MCF 10A (cell line): ENCODE measurements at regions of chr10 and their contacts with region 1.

Region 1: DNA sequence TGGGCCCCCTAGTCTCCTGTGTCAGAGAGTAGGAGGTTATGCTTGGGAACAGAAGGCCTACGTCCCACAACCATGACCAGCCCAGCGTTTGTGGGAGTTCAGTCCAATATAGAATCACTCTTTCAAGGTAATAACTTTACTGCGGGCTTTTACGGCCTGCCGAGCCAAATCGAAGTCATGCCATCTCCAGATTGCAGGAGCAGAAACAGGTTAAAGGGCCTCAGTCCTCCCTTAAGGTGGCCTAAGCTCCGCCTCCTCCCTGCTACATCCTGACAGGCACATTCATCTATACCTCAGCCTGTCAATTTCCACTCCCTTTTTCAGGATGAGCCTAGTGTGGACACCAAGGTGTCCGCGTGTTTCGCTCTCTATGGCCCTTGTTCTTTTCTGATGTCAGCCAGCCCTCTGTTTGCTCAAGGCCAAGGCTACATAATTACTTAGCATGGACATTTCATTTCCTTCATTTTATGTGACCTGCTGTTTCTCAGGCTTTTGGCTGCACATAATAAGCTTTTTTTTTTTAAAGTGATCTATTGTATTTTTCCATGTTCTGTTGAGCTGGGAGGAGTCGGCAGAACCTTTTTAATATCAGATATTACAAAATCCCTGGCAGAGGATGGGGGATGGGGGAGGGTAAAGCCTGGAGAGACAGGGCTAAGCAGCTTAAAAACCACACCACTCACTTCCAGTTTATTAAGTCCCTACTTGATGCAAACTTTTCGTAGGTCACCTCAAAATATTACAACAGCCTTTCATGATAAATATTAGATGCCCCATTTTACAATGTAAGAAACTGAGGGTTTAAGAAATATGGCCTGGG is 84.6 kb downstream of the CACNB2 start:
- DNase-seq: no peak
- H3K4me3 Mint-ChIP-seq: no peak overlapping the region
- H3K27ac Mint-ChIP-seq: no peak overlapping the region
- H3K4me1 Mint-ChIP-seq: peaks cover 14% of the 10 kb centered on the region
- H3K27me3 Mint-ChIP-seq: no peaks in the 10 kb centered on the region
- CTCF ChIP-seq: no peak

Region 2: DNA sequence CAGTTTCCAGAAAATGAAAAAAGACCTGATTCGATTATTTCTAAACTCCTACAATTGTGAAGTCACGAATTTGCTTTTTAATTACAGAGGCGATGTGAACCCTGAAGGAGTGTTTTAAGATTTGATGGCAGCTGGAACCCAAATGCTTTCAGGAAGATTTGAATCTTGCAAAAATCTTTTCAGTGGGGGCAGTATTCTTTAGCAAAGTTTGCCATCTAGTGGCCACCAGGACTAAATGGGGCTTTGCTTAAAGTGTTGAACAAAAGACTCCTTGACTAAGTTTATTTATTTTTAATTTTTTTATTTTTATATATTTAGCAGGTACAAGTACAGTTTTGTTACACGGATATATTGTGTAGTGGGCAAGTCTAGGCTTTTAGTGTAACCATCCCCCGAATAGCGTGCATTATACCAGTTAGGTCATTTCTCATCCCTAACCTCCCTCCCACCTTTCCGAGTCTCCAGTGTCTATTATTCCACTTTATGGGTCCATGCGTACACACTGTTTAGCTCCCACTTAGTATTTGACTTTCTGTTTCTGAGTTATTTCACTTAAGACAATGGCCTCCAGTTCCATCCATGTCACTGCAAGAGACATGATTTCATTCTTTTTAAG is 14.1 kb after region 1 on chr10:
- CTCF ChIA-PET with region 1: interaction called, 20 read pairs
- POLR2A ChIA-PET with region 1: interaction called, 3 read pairs
- intact Hi-C with region 1: no loop called
- DNase-seq: peak; percentile 57
- H3K4me3 Mint-ChIP-seq: no peak overlapping the region
- H3K27ac Mint-ChIP-seq: no peak overlapping the region
- H3K4me1 Mint-ChIP-seq: peaks cover 18% of the 10 kb centered on the region
- H3K27me3 Mint-ChIP-seq: no peaks in the 10 kb centered on the region
- CTCF ChIP-seq: peak; percentile 59